ENCODE measurements at regions of chr3 and their contacts with region 1.

Region 1: GRCh38 chr3:32283304-32283703 is 44.8 kb downstream of the CMTM8 start:
- DNase-seq: no peak
- H3K4me3 ChIP-seq: no peak overlapping the region
- H3K27ac ChIP-seq: no peak overlapping the region
- H3K4me1 ChIP-seq: peaks cover 14% of the 10 kb centered on the region
- H3K27me3 ChIP-seq: no peaks in the 10 kb centered on the region
- CTCF ChIP-seq: no peak

Region 2: GRCh38 chr3:32194653-32195052 is 88.7 kb before region 1 on chr3:
- CTCF ChIA-PET with region 1: no interaction called
- POLR2A ChIA-PET with region 1: interaction called, 13 read pairs
- intact Hi-C with region 1: no loop called
- DNase-seq: no peak
- H3K4me3 ChIP-seq: no peak overlapping the region
- H3K27ac ChIP-seq: no peak overlapping the region
- H3K4me1 ChIP-seq: no peaks in the 10 kb centered on the region
- H3K27me3 ChIP-seq: no peaks in the 10 kb centered on the region
- CTCF ChIP-seq: no peak

Measured in PC-9 (cell line).